OCI-LY7 (cell line): ENCODE measurements at regions of chr14 and their contacts with region 1.

Region 1: DNA sequence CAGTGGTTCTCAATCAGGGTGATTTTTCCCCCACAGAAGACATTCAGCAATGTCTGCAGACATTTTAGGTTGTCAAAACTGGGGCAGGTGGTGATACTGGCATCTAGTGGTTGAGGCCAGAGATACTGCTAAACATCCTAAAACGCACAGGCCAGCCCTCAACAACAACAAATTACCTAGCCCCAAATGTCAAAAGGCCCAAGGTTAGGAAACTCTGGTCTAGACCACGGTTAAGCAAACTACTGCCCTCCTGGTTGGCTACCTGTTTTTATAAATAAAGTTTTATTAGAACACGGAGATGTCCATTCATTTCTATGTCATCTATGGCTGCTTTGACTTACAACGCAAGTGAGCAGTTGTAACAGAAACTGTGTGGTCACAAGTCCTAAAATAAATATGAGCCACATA is 186.7 kb downstream of the EFCAB11 start:
- DNase-seq: peak; percentile 81
- H3K4me3 ChIP-seq: no peak overlapping the region
- H3K27ac ChIP-seq: no peak overlapping the region
- H3K4me1 ChIP-seq: peaks cover 37% of the 10 kb centered on the region
- CTCF ChIP-seq: peak; percentile 94

Region 2: GRCh38 chr14:89178802-89179535 is 588.9 kb before region 1 on chr14:
- CTCF ChIA-PET with region 1: no interaction called
- POLR2A ChIA-PET with region 1: no interaction called
- intact Hi-C with region 1: loop called (anchors 2 kb)
- DNase-seq: no peak
- H3K4me3 ChIP-seq: no peak overlapping the region
- H3K27ac ChIP-seq: no peak overlapping the region
- H3K4me1 ChIP-seq: peaks cover 10% of the 10 kb centered on the region
- CTCF ChIP-seq: no peak

Region 3: GRCh38 chr14:90093942-90094595 is 326.2 kb after region 1 on chr14:
- CTCF ChIA-PET with region 1: no interaction called
- POLR2A ChIA-PET with region 1: no interaction called
- intact Hi-C with region 1: no loop called
- DNase-seq: no peak
- H3K4me3 ChIP-seq: no peak overlapping the region
- H3K27ac ChIP-seq: no peak overlapping the region
- H3K4me1 ChIP-seq: no peaks in the 10 kb centered on the region
- CTCF ChIP-seq: no peak

Region 4: GRCh38 chr14:90905531-90905930 is 1137.7 kb after region 1 on chr14:
- CTCF ChIA-PET with region 1: no interaction called
- POLR2A ChIA-PET with region 1: no interaction called
- intact Hi-C with region 1: no loop called
- DNase-seq: peak; percentile 9
- H3K4me3 ChIP-seq: no peak overlapping the region
- H3K27ac ChIP-seq: no peak overlapping the region
- H3K4me1 ChIP-seq: peaks cover 8% of the 10 kb centered on the region
- CTCF ChIP-seq: no peak